CD8-positive, alpha-beta memory T cell (primary cell): ENCODE measurements at regions of chr17 and their contacts with region 1.

Region 1: DNA sequence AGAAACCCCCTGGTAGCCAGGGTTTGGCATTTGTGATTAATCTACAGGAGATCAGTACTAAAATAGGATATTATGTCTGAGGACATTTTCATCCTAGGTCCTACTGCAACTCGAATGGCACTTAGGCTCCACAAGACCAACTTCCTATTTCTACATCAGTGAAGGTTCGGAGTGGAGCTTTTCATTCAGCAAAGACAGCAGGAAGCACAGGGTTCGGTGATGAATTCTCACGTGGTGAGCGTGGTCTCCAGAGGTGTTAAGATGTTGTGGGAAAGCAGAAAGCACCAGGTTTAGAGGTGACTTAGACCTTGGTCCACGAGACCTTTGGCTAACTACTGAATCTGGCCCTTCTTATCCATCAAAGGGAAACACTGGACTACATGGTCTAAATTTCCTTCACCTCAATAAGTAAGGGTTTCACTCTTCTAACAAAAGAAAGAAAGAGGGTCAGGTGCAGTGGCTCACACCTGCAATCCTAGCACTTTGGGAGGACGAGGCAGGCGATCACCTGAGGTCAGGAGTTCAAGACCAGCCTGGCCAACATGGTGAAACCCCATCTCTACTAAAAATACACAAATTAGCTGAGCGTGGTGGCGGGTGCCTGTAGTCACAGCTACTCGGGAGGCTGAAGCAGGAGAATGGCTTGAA is 13.9 kb upstream of the HELZ start:
- DNase-seq: peak in 4 of 5 donors; percentile 26 to 71 (median 58)
- H3K4me3 ChIP-seq: no peak overlapping the region
- H3K4me3 Mint-ChIP-seq: peak overlapping the region; percentile 65 to 82 (median 78)
- H3K27ac ChIP-seq: no peak overlapping the region
- H3K27ac Mint-ChIP-seq: peak overlapping the region; percentile 23 to 93 (median 82)
- H3K4me1 ChIP-seq: peaks cover 22% of the 10 kb centered on the region
- H3K4me1 Mint-ChIP-seq: peaks cover 28 to 49% (median 46%) of the 10 kb centered on the region in 3 donors
- H3K27me3 ChIP-seq: no peaks in the 10 kb centered on the region
- H3K27me3 Mint-ChIP-seq: no peaks in the 10 kb centered on the region

Region 2: DNA sequence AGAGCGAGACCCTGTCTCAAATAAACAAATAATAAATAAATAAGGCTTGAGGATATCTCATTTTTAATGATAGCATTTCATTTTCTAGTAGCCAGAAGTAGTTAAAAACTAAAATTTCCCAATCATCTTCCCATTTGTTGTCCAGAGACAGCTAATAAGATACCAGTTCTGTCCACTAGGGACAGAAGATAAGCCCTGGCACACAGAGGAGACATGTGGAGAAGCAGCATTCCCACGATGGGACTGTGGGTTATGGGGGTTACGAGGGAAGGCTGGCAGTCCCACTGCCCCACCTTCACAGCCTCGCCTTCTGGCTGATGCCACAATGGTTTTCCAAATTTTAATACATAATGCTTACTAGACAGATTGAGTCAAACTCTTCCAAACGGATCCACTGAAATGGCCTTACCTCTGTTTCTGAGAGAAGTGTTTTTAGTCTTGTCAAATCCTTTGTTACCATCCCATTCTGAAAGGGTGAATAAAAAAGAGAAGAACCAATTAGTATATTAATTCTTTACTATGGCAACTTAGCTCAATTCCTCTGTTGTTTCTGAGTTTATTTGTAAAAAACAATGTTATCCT is 58.1 kb before region 1 on chr17:
- CTCF ChIA-PET with region 1: no interaction called
- POLR2A ChIA-PET with region 1: no interaction called
- DNase-seq: no peak
- H3K4me3 ChIP-seq: no peak overlapping the region
- H3K4me3 Mint-ChIP-seq: no peak overlapping the region
- H3K27ac ChIP-seq: no peak overlapping the region
- H3K27ac Mint-ChIP-seq: no peak overlapping the region
- H3K4me1 ChIP-seq: no peaks in the 10 kb centered on the region
- H3K4me1 Mint-ChIP-seq: peaks cover 30 to 44% (median 42%) of the 10 kb centered on the region in 3 donors
- H3K27me3 ChIP-seq: no peaks in the 10 kb centered on the region
- H3K27me3 Mint-ChIP-seq: no peaks in the 10 kb centered on the region

Region 3: GRCh38 chr17:67245073-67245755 is 13.7 kb before region 1 on chr17 and contains the start of gene HELZ:
- CTCF ChIA-PET with region 1: interaction called, 4 read pairs
- POLR2A ChIA-PET with region 1: interaction called, 13 read pairs
- DNase-seq: peak; percentile 68 to 81 (median 79)
- H3K4me3 ChIP-seq: peak within 1 kb of the TSS; percentile 73
- H3K4me3 Mint-ChIP-seq: peak within 1 kb of the TSS; percentile 87 to 96 (median 91)
- H3K27ac ChIP-seq: peak within 1 kb of the TSS; percentile 81
- H3K27ac Mint-ChIP-seq: peak within 1 kb of the TSS; percentile 78 to 96 (median 92)
- H3K4me1 ChIP-seq: peaks cover 47% of the 10 kb centered on the region
- H3K4me1 Mint-ChIP-seq: peaks cover 54 to 63% (median 62%) of the 10 kb centered on the region in 3 donors
- H3K27me3 ChIP-seq: no peaks in the 10 kb centered on the region
- H3K27me3 Mint-ChIP-seq: no peaks in the 10 kb centered on the region
- total RNA-seq, gene HELZ: 56.4 to 62.5 TPM

Region 4: DNA sequence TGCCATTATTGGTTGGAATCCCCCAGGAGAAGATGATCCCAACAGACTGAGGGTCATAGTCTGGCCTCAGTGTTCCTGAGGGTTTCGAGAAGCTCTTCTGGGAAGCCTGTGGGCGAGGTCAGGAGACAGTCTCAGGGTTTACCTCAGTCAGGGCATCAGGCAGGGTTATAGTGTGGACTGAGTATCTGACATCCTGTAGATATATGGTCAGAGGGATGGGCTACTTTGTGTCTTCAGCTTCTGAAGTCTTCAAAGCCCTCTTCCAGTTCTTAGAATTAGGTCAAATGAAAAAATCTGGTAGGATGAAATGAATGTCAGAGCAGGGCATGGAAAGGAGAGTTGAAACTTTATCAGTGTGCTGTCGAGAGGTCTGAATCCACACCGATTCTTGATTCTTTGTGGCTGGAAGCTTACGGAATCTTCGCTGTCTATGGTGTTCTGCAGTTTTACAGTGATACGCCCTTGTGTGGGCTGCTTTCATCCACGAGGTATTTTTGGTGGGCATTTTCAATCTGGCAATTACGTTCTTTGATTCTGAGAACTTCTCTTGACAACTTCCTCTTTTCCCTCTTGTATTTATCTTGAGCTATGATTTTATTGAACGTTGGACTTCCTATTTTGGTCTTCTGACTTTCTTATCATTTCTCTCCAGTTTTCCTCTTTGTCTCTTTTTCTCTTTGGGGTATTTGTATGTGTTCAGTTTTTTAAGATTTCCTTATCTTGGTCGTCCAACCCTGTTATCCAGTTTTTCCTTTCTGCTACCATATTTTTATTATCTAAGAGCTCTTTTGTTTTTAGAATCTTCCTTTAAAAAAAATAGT is 596.8 kb after region 1 on chr17:
- CTCF ChIA-PET with region 1: no interaction called
- POLR2A ChIA-PET with region 1: interaction called, 12 read pairs
- DNase-seq: no peak
- H3K4me3 ChIP-seq: no peak overlapping the region
- H3K4me3 Mint-ChIP-seq: peak overlapping the region; percentile 9 to 73 (median 60)
- H3K27ac ChIP-seq: no peak overlapping the region
- H3K27ac Mint-ChIP-seq: peak overlapping the region; percentile 28 to 65 (median 50)
- H3K4me1 ChIP-seq: peaks cover 50% of the 10 kb centered on the region
- H3K4me1 Mint-ChIP-seq: peaks cover 76 to 97% (median 93%) of the 10 kb centered on the region in 3 donors
- H3K27me3 ChIP-seq: no peaks in the 10 kb centered on the region
- H3K27me3 Mint-ChIP-seq: no peaks in the 10 kb centered on the region